ENCODE measurements at regions of chr4 and their contacts with region 1.

Region 1: GRCh38 chr4:5821665-5822358 is 71.1 kb downstream of the CRMP1 start:
- DNase-seq: peak; percentile 41
- ATAC-seq: no peak
- H3K4me3 Mint-ChIP-seq: no peak overlapping the region
- H3K27ac Mint-ChIP-seq: no peak overlapping the region
- H3K4me1 Mint-ChIP-seq: peaks cover 8% of the 10 kb centered on the region
- H3K27me3 Mint-ChIP-seq: no peaks in the 10 kb centered on the region

Region 2: DNA sequence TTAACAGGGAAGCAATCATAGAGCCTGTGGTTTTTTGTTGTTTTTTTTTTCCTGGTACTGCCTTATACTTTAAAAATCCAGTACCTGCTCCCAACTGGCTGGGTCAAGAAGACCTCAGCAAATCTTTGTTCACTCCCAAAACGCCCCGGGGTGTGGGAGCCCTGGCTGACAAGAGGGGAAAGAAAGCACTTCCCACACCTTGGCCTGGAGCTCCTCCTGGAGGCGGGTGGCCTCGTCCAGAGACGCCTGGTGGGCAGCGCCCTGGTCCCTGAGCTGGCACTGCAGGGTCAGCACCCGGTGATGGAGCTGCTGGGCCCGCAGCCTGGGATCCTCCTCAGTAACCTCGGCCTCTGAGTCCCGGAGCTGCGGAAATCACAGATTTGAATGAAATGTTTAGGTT is 158.2 kb after region 1 on chr4:
- CTCF ChIA-PET with region 1: no interaction called
- POLR2A ChIA-PET with region 1: no interaction called
- intact Hi-C with region 1: loop called in 1 of 2 experiments (anchors 1 kb)
- DNase-seq: peak; percentile 29
- ATAC-seq: no peak
- H3K4me3 Mint-ChIP-seq: no peak overlapping the region
- H3K27ac Mint-ChIP-seq: no peak overlapping the region
- H3K4me1 Mint-ChIP-seq: no peaks in the 10 kb centered on the region
- H3K27me3 Mint-ChIP-seq: peaks cover 23% of the 10 kb centered on the region

Measured in activated CD4-positive, alpha-beta T cell treated with anti-CD3 and anti-CD28 coated beads for 36 hours (primary cell).